B cell (primary cell): ENCODE measurements at regions of chr7 and their contacts with region 1.

Region 1: GRCh38 chr7:56063882-56064625 is at the start of gene SUMF2:
- DNase-seq: peak; percentile 95
- ATAC-seq: peak; percentile 92
- H3K4me3 ChIP-seq: peak within 1 kb of the TSS; percentile 63 to 94 (median 83)
- H3K4me3 Mint-ChIP-seq: peak within 1 kb of the TSS; percentile 86
- H3K27ac ChIP-seq: peak within 1 kb of the TSS; percentile 59 to 78
- H3K27ac Mint-ChIP-seq: peak within 1 kb of the TSS; percentile 94
- H3K4me1 ChIP-seq: peaks cover 5 to 12% of the 10 kb centered on the region in 2 donors
- H3K4me1 Mint-ChIP-seq: peaks cover 22% of the 10 kb centered on the region
- H3K27me3 ChIP-seq: no peaks in the 10 kb centered on the region
- H3K27me3 Mint-ChIP-seq: no peaks in the 10 kb centered on the region
- CTCF ChIP-seq: peak; percentile 21
- total RNA-seq, gene SUMF2: 112 and 115 TPM in 2 replicates

Region 2: DNA sequence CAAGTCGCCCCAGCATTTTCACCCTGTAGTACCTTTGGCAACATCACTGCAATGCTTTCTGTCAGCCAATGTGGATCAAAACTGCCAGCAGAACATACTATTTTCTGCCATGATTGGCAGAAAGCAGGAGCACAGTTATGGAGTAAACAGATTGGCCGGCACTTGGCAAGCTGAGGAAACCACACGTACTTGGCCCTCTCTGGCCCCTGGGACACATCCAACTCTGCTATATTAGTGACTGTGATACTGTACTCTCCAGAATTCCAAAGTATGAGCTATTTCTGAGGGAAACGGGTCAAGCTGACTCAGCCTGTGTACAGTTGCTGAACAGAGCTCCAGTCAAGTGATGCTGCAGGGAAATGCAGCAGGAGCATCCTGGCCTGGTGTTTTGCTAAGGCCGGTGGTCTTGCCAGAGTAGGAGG is 738.7 kb before region 1 on chr7:
- CTCF ChIA-PET with region 1: no interaction called
- POLR2A ChIA-PET with region 1: no interaction called
- intact Hi-C with region 1: no loop called
- DNase-seq: no peak
- ATAC-seq: no peak
- H3K4me3 ChIP-seq: no peak overlapping the region
- H3K4me3 Mint-ChIP-seq: no peak overlapping the region
- H3K27ac ChIP-seq: no peak overlapping the region
- H3K27ac Mint-ChIP-seq: no peak overlapping the region
- H3K4me1 ChIP-seq: no peaks in the 10 kb centered on the region
- H3K4me1 Mint-ChIP-seq: no peaks in the 10 kb centered on the region
- H3K27me3 ChIP-seq: no peaks in the 10 kb centered on the region
- H3K27me3 Mint-ChIP-seq: peaks cover 16% of the 10 kb centered on the region
- CTCF ChIP-seq: no peak

Region 3: GRCh38 chr7:55878691-55879090 is 185.4 kb before region 1 on chr7:
- CTCF ChIA-PET with region 1: no interaction called
- POLR2A ChIA-PET with region 1: interaction called, 12 read pairs
- intact Hi-C with region 1: no loop called
- DNase-seq: no peak
- ATAC-seq: no peak
- H3K4me3 ChIP-seq: no peak overlapping the region
- H3K4me3 Mint-ChIP-seq: no peak overlapping the region
- H3K27ac ChIP-seq: no peak overlapping the region
- H3K27ac Mint-ChIP-seq: no peak overlapping the region
- H3K4me1 ChIP-seq: no peaks in the 10 kb centered on the region
- H3K4me1 Mint-ChIP-seq: no peaks in the 10 kb centered on the region
- H3K27me3 ChIP-seq: no peaks in the 10 kb centered on the region
- H3K27me3 Mint-ChIP-seq: peaks cover 4% of the 10 kb centered on the region
- CTCF ChIP-seq: no peak

Region 4: DNA sequence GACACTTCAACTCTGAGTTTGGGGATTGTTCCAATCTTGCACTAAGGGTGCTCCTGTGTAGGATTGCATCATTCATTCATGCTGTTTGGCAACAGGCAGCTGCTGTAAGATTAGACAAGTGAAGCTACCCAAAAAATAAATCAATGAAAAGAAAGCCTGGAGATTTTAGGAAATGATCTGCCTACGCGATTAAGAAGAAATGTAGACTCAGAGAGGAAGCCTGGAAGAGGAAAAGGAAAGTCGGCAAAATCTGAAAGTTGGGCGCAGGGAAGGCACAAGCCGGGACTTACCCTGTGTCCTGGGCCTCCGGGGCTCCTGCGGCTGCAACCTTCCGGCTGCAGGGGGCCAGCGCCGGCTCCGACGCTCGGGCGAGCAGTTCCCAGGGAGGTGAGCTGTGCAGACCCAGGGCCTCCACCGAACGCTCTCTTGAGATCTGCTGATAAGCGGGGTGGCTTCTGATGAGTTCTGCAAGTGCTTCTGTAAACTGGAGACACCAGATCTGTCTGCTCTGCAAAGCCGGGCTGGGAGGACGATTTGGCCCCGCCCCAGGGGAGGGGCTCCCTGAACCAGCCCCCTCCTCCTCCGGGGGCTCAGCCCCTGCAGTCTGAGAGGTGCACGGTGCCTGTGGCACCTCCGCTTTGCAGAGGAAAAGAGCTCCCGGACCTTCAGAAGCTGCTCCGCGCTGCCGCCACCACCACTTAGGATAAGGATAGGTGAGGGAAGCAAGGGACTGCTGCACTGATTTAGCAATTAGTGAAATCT is 30.2 kb before region 1 on chr7:
- CTCF ChIA-PET with region 1: interaction called, 4 read pairs
- POLR2A ChIA-PET with region 1: interaction called, 4 read pairs
- intact Hi-C with region 1: loop called (anchors 1 kb)
- DNase-seq: peak; percentile 74
- ATAC-seq: peak; percentile 99
- H3K4me3 ChIP-seq: peak overlapping the region; percentile 50 to 77 (median 70)
- H3K4me3 Mint-ChIP-seq: peak overlapping the region; percentile 84
- H3K27ac ChIP-seq: peak overlapping the region in 1 of 2 donors; percentile 23
- H3K27ac Mint-ChIP-seq: peak overlapping the region; percentile 8
- H3K4me1 ChIP-seq: peaks cover 3 to 8% of the 10 kb centered on the region in 2 donors
- H3K4me1 Mint-ChIP-seq: peaks cover 6% of the 10 kb centered on the region
- H3K27me3 ChIP-seq: no peaks in the 10 kb centered on the region
- H3K27me3 Mint-ChIP-seq: no peaks in the 10 kb centered on the region
- CTCF ChIP-seq: peak; percentile 29

Region 5: DNA sequence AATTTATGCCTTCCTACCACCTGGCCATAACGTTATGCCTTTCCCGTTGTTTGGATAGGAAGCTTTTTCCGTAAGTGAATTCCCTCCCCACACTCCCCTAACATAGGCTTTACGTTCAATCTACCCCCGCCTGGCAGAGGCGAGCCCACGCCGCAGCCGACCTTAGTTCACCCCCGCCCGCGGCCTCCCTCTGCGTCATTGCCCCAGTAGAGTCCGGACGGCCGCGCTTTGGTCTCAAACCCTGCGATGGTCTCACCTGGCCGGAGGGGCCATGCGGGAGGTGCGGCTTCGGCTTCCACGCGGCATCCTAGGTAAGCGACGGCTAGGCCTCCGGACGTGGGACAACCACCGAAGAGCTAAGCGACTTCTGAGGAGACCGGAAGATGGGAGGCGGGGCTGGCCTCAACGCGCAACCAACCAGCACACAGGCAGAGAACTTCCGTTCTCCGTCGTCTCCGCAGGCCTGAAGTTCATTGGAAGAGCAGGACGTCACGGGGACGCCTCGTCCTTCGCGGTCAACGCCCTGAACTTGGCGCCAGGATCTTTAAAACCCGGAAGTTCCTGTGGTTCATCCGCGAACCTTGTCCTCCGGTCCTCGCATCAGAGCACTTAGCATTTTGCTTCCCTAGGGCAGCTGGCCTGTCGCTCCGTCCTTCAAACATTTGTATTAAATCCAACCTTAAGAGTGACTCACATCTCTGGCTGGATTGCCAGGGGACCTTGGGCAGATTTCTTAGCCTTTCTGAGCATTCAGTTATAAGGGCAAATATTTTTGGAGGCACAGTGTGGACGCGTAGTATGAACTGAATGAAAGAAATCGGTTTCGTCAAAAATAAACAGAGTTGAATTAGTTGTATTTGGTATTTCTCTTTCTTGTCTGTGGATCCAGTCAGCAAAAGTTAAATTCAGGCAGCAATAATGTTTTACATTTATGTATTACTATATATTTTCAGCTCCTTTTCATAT is 42.3 kb after region 1 on chr7 and contains the start of gene CHCHD2:
- CTCF ChIA-PET with region 1: no interaction called
- POLR2A ChIA-PET with region 1: interaction called, 3 read pairs
- intact Hi-C with region 1: loop called (anchors 1 kb)
- DNase-seq: peak; percentile 97
- ATAC-seq: peak; percentile 99
- H3K4me3 ChIP-seq: peak within 1 kb of the TSS; percentile 75 to 99 (median 87)
- H3K4me3 Mint-ChIP-seq: peak within 1 kb of the TSS; percentile 99
- H3K27ac ChIP-seq: peak within 1 kb of the TSS; percentile 77 to 89
- H3K27ac Mint-ChIP-seq: peak within 1 kb of the TSS; percentile 98
- H3K4me1 ChIP-seq: peaks cover 17 to 22% of the 10 kb centered on the region in 2 donors
- H3K4me1 Mint-ChIP-seq: peaks cover 36% of the 10 kb centered on the region
- H3K27me3 ChIP-seq: peaks cover 0 to 3% (median 0%) of the 10 kb centered on the region in 4 experiments
- H3K27me3 Mint-ChIP-seq: peaks cover 3% of the 10 kb centered on the region
- CTCF ChIP-seq: no peak
- total RNA-seq, gene CHCHD2: 166 and 168 TPM in 2 replicates

Region 6: GRCh38 chr7:56115852-56116538 is 51.9 kb after region 1 on chr7 and contains the start of gene NUPR2:
- CTCF ChIA-PET with region 1: no interaction called
- POLR2A ChIA-PET with region 1: interaction called, 11 read pairs
- intact Hi-C with region 1: no loop called
- DNase-seq: no peak
- ATAC-seq: no peak
- H3K4me3 ChIP-seq: no peak within 1 kb of the TSS
- H3K4me3 Mint-ChIP-seq: no peak within 1 kb of the TSS
- H3K27ac ChIP-seq: no peak within 1 kb of the TSS
- H3K27ac Mint-ChIP-seq: no peak within 1 kb of the TSS
- H3K4me1 ChIP-seq: no peaks in the 10 kb centered on the region
- H3K4me1 Mint-ChIP-seq: no peaks in the 10 kb centered on the region
- H3K27me3 ChIP-seq: peaks cover 0 to 21% (median 1%) of the 10 kb centered on the region in 4 experiments
- H3K27me3 Mint-ChIP-seq: peaks cover 21% of the 10 kb centered on the region
- CTCF ChIP-seq: no peak
- total RNA-seq, gene NUPR2: not detected in 2 replicates